Pancreas (tissue), 10 donors: ENCODE measurements at regions of chr6 and their contacts with region 1.

Region 1: DNA sequence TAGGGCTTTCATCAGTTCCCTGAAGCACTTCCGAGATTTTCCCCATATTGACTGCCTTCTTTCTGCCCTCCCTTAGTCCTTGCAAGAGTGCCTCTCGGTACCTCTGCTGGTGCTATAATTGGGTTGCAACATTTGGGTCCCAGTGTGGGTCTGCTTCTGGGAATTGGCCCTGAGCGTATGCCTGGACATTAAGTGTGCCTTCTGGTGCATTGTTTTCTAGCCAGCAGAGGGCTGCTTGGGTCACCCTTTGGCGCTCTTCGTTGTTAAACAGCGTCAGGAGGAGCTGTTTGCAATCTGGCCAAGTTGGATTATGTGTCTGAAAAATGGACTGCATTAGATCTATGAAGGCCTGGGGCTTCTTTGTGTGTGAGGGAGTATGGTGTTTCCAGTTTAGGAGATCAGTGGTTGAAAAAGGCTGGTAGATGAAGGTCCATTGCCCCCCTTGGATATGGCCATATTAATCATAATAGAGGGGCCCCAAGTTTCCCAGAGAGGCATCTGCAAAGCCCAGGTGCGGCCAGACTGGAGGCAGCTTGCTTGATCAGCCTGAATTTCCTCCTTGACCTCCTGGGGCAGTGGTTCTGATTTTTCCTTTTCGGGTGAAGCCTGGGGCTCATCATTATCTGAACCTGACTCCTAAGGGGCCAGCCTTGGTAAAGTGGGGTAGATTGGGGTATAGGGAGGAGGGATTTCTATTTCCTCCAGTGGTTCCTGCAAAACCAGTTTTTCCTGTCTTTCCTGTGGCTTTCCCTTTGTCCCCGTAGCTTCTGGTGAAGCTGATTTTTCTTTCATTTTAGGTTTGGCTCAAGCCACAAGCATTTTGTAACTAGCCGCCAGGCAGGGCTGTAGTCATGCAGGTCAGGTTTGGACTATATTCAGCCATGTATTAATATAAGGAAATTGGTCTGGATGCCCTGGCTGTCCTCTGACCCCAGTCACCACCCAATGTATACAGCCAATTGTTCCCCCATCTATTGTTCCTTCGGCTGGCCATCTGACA is 85.4 kb upstream of the GPR6 start:
- DNase-seq: peak in 3 of 6 donors; percentile 49 to 68 (median 64)
- ATAC-seq: peak; percentile 87 to 90 (median 89)
- H3K4me3 ChIP-seq: peak overlapping the region in 2 of 4 donors; percentile 17 to 19
- H3K27ac ChIP-seq: peak overlapping the region in 2 of 4 donors; percentile 64 to 78
- H3K4me1 ChIP-seq: peaks cover 0 to 8% (median 3%) of the 10 kb centered on the region in 3 donors
- H3K27me3 ChIP-seq: no peaks in the 10 kb centered on the region
- CTCF ChIP-seq: no peak

Region 2: DNA sequence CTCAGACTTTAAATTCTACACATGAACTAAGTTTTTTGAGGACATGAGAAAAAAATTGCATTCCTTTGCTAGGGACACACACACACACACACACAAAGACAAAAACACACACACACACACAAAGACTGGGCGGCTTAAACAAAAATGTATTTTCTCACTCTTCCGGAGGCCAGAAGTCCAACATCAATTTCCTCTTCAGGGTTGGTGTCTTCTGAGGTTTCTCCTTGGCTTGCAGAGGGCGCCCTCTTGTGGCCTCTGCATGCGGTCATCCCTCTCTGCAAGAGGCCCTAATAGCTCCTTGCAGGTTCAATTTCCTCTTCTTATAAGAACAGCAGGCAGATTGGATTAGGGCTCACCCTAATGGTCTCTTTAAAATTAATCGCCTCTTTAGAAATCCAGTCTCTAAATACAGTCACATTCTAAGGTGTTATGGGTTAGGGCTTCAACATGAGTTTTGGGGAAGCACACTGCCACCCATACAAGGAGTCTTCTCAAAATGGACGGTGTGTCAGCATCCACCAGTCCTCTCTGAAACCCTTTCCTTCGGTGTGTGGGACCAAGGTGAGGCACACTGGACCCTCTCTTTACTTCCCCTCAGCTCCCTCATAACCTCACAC is 146.7 kb after region 1 on chr6:
- intact Hi-C with region 1: loop called in 1 of 3 experiments (anchors 10 kb)
- DNase-seq: peak; percentile 72 to 90 (median 84)
- ATAC-seq: peak; percentile 96 to 98 (median 97)
- H3K4me3 ChIP-seq: peak overlapping the region in 2 of 4 donors; percentile 17 to 31
- H3K27ac ChIP-seq: peak overlapping the region in 3 of 4 donors; percentile 2 to 52 (median 23)
- H3K4me1 ChIP-seq: no peaks in the 10 kb centered on the region
- H3K27me3 ChIP-seq: no peaks in the 10 kb centered on the region
- CTCF ChIP-seq: peak; percentile 76 to 88 (median 86)